Activated CD8-positive, alpha-beta T cell treated with anti-CD3 and anti-CD28 coated beads, Interleukin-2, amount 10 ng/mL, durations not matched to agents 7 days and 5 days (primary cell): ENCODE measurements at regions of chr9 and their contacts with region 1.

Region 1: GRCh38 chr9:128067876-128068613 is at the start of gene SLC25A25:
- DNase-seq: peak; percentile 100
- ATAC-seq: peak; percentile 82
- H3K4me3 Mint-ChIP-seq: peak within 1 kb of the TSS; percentile 99
- H3K27ac Mint-ChIP-seq: peak within 1 kb of the TSS; percentile 90
- H3K4me1 Mint-ChIP-seq: peaks cover 50% of the 10 kb centered on the region
- H3K27me3 Mint-ChIP-seq: no peaks in the 10 kb centered on the region
- total RNA-seq, gene SLC25A25: 17.2 to 19.2 TPM

Region 2: GRCh38 chr9:128081056-128081455 is 13.0 kb after region 1 on chr9:
- CTCF ChIA-PET with region 1: interaction called, 11 read pairs
- POLR2A ChIA-PET with region 1: interaction called, 6 read pairs
- DNase-seq: no peak
- ATAC-seq: no peak
- H3K4me3 Mint-ChIP-seq: no peak overlapping the region
- H3K27ac Mint-ChIP-seq: peak overlapping the region; percentile 31
- H3K4me1 Mint-ChIP-seq: peaks cover 44% of the 10 kb centered on the region
- H3K27me3 Mint-ChIP-seq: no peaks in the 10 kb centered on the region

Region 3: GRCh38 chr9:128094166-128094967 is 26.3 kb after region 1 on chr9:
- CTCF ChIA-PET with region 1: interaction called, 10 read pairs
- POLR2A ChIA-PET with region 1: interaction called, 12 read pairs
- DNase-seq: peak; percentile 73
- ATAC-seq: peak; percentile 89
- H3K4me3 Mint-ChIP-seq: no peak overlapping the region
- H3K27ac Mint-ChIP-seq: peak overlapping the region; percentile 79
- H3K4me1 Mint-ChIP-seq: peaks cover 75% of the 10 kb centered on the region
- H3K27me3 Mint-ChIP-seq: no peaks in the 10 kb centered on the region

Region 4: GRCh38 chr9:128103589-128103962 is 35.5 kb after region 1 on chr9:
- CTCF ChIA-PET with region 1: interaction called, 13 read pairs
- POLR2A ChIA-PET with region 1: interaction called, 3 read pairs
- DNase-seq: peak; percentile 63
- ATAC-seq: peak; percentile 69
- H3K4me3 Mint-ChIP-seq: no peak overlapping the region
- H3K27ac Mint-ChIP-seq: peak overlapping the region; percentile 88
- H3K4me1 Mint-ChIP-seq: peaks cover 51% of the 10 kb centered on the region
- H3K27me3 Mint-ChIP-seq: no peaks in the 10 kb centered on the region